HEK293 (cell line): ENCODE measurements at regions of chr7 and their contacts with region 1.

Region 1: DNA sequence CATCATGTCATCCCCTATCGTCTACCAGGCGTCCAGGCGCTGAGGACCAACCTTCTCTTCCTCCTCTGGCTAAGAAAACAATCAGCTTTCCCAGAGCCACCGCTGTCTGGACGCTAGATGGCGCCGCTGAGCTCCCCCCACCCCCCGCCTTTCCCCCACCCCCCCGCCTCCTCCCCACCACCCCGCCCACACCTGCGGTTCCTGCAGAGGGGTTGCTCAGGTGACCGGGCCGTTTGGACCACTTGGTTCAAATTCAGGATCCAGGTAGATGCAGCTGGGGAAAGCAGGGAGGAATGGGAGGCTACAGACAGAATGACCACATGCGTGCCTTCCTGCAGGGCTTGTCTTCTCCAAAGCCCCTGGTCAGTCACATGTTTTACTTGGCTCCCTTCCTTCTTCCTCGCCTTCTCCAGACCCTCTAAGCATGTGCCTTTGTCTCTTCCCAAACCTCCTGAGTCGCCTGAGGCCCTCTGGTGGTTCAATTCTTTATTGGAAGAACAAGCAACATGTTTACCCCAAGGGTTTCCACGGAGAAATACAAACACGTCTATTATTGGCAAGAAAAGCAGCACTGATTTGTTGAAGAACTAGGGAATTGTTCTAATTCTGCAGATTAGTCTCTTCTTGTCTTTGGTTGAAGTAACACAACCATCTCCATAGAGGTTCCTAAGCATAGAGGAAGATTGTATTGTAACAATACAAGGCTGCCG is 24.7 kb downstream of the AOC1 start:
- H3K4me3 ChIP-seq: peak overlapping the region; percentile 27
- H3K27ac ChIP-seq: no peak overlapping the region
- H3K4me1 ChIP-seq: no peaks in the 10 kb centered on the region
- CTCF ChIP-seq: peak; percentile 56; the same call in 1 of the 2 replicates

Region 2: GRCh38 chr7:150778738-150779301 is 98.2 kb before region 1 on chr7:
- CTCF ChIA-PET with region 1: interaction called, 77 read pairs
- POLR2A ChIA-PET with region 1: no interaction called
- H3K4me3 ChIP-seq: no peak overlapping the region
- H3K27ac ChIP-seq: no peak overlapping the region
- H3K4me1 ChIP-seq: no peaks in the 10 kb centered on the region
- CTCF ChIP-seq: peak; percentile 52

Region 3: DNA sequence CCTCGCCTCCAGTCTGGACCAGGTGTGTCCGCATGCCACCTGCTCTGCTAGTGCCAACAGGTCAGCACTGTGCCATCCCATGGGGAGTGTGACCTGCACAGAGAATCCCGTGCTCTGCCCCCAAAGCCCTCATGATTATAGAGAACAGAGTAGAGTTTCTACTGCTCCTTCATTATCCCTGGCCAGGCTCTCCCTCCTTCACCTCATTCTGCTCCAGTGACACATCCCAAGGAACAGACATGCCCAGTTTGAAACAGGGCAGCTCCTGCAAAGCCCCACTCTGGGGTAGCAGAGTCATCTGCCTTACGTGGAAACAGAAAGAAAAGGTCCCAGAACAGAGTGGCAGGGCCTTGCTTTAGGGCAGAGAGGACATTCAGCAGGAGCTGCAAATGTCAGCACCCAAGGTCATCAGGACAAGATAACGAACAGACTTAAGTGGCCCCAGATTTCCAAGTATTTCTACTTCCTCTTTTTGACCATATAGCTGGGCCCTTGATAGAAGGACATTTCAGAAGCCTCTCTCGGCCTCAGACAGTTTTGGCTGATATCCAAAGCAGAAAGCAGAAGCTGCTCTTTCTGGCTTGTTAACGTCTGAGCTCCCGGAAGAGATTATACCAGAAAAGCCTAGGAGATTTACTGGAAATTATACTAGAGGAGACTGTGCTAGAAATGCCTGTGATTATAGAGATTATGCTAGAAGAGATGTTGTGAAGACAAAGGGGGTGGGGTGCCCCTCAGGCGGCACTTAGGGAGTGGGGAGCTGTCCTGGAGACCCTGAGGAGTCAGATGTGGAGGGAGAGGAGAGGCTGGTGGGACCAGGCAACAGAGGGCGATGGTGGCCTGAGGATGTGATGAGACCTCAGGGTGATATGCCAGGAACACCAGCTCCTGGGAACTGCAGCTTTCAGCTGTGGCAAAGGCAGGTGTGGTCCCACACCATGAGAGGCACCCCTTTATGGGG is 89.4 kb before region 1 on chr7:
- CTCF ChIA-PET with region 1: interaction called, 77 read pairs
- POLR2A ChIA-PET with region 1: no interaction called
- H3K4me3 ChIP-seq: no peak overlapping the region
- H3K27ac ChIP-seq: peak overlapping the region; percentile 34; the same call in 1 of the 2 replicates
- H3K4me1 ChIP-seq: 0 out of 2 replicates have a peak, but pooled peaks cover 3% of the 10 kb centered on the region
- CTCF ChIP-seq: peak; percentile 55; the same call in 1 of the 2 replicates

Region 4: GRCh38 chr7:151003572-151003971 is 126.6 kb after region 1 on chr7:
- CTCF ChIA-PET with region 1: no interaction called
- POLR2A ChIA-PET with region 1: no interaction called
- H3K4me3 ChIP-seq: no peak overlapping the region
- H3K27ac ChIP-seq: no peak overlapping the region
- H3K4me1 ChIP-seq: no peaks in the 10 kb centered on the region
- CTCF ChIP-seq: no peak

Region 5: DNA sequence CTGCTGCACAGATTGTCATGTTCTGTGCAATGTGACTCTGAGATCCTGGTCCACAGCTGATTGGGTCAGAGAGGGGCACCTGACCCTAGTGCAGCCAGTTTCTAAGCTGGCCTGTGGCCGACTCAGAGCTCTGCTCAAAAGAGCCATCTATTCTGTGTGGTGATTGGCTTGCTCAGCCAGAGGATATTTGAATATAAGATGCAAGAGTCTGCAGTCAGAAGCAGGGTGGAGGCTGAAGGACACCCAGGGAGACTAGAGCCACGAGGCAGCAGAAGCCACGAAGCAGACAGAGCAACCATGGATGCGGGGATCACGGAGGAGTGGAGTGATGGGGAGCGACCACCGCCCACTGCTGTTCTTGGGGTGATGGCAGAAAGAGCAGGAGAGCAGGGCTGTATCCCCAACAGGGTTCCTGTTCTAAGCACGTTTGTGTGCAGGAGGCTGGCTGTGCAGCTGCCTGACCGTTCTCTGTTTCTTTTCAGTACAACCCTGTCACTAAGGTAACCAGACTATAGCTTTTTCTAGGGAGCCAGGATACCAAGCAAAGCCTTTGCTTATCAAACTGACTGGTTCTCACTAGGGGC is 662.2 kb after region 1 on chr7:
- CTCF ChIA-PET with region 1: no interaction called
- POLR2A ChIA-PET with region 1: no interaction called
- H3K4me3 ChIP-seq: no peak overlapping the region
- H3K27ac ChIP-seq: no peak overlapping the region
- H3K4me1 ChIP-seq: no peaks in the 10 kb centered on the region
- CTCF ChIP-seq: no peak